B cell (primary cell): ENCODE measurements at regions of chr17 and their contacts with region 1.

Region 1: GRCh38 chr17:81917565-81918332 is at the start of gene SIRT7:
- DNase-seq: peak; percentile 92
- ATAC-seq: peak; percentile 90
- H3K4me3 ChIP-seq: peak within 1 kb of the TSS; percentile 53 to 75 (median 69)
- H3K4me3 Mint-ChIP-seq: peak within 1 kb of the TSS; percentile 91
- H3K27ac ChIP-seq: peak within 1 kb of the TSS; percentile 44 to 61
- H3K27ac Mint-ChIP-seq: peak within 1 kb of the TSS; percentile 90
- H3K4me1 ChIP-seq: peaks cover 13 to 22% of the 10 kb centered on the region in 2 donors
- H3K4me1 Mint-ChIP-seq: peaks cover 28% of the 10 kb centered on the region
- H3K27me3 ChIP-seq: no peaks in the 10 kb centered on the region
- H3K27me3 Mint-ChIP-seq: no peaks in the 10 kb centered on the region
- CTCF ChIP-seq: no peak
- total RNA-seq, gene SIRT7: 82.7 and 83.2 TPM in 2 replicates

Region 2: GRCh38 chr17:81651692-81652091 is 266.1 kb before region 1 on chr17:
- CTCF ChIA-PET with region 1: no interaction called
- POLR2A ChIA-PET with region 1: no interaction called
- intact Hi-C with region 1: no loop called
- DNase-seq: no peak
- ATAC-seq: no peak
- H3K4me3 ChIP-seq: no peak overlapping the region
- H3K4me3 Mint-ChIP-seq: peak overlapping the region; percentile 49
- H3K27ac ChIP-seq: no peak overlapping the region
- H3K27ac Mint-ChIP-seq: no peak overlapping the region
- H3K4me1 ChIP-seq: peaks cover 12 to 18% of the 10 kb centered on the region in 2 donors
- H3K4me1 Mint-ChIP-seq: peaks cover 15% of the 10 kb centered on the region
- H3K27me3 ChIP-seq: peaks cover 0 to 36% (median 4%) of the 10 kb centered on the region in 4 experiments
- H3K27me3 Mint-ChIP-seq: peaks cover 18% of the 10 kb centered on the region
- CTCF ChIP-seq: no peak

Region 3: GRCh38 chr17:81871387-81872230 is 46.1 kb before region 1 on chr17:
- CTCF ChIA-PET with region 1: interaction called, 4 read pairs
- POLR2A ChIA-PET with region 1: no interaction called
- intact Hi-C with region 1: loop called (anchors 2 kb)
- DNase-seq: peak; percentile 96
- ATAC-seq: peak; percentile 2
- H3K4me3 ChIP-seq: peak overlapping the region; percentile 27 to 90 (median 84)
- H3K4me3 Mint-ChIP-seq: peak overlapping the region; percentile 89
- H3K27ac ChIP-seq: peak overlapping the region; percentile 90 to 99
- H3K27ac Mint-ChIP-seq: peak overlapping the region; percentile 98
- H3K4me1 ChIP-seq: peaks cover 22 to 39% of the 10 kb centered on the region in 2 donors
- H3K4me1 Mint-ChIP-seq: peaks cover 32% of the 10 kb centered on the region
- H3K27me3 ChIP-seq: no peaks in the 10 kb centered on the region
- H3K27me3 Mint-ChIP-seq: no peaks in the 10 kb centered on the region
- CTCF ChIP-seq: peak; percentile 50

Region 4: DNA sequence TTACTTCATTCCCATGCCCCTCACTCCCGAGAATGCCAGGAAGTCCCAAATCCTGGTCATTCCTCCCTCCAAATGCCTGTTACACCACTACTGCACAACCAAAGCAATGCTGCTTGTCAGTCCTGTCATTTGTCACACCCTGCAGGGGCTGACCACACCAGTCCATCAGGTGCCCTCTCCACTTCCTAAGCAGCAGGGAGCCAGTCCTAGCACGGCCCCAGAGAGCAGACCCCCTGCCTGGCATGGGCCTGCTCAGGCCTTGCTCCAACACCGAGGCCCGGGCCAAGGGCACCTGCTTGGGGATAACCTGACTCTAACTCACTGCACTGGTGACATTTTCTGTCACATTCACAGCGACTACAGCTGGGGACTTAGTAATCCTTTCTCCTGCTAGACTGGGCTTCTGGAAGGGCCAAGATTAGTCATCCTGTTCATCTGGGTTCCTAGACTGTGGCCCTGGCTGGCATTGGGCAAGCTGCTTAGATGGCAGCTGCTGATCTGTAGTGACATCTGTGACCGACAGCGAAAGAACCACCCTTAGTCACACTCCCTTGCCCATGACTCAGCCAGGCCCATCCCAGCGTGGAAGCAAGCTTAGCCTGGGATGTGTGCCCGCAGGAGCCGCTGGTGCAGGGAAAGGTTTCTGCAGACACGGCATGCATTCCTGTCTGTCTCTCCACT is 31.7 kb before region 1 on chr17:
- CTCF ChIA-PET with region 1: no interaction called
- POLR2A ChIA-PET with region 1: no interaction called
- intact Hi-C with region 1: no loop called
- DNase-seq: no peak
- ATAC-seq: no peak
- H3K4me3 ChIP-seq: no peak overlapping the region
- H3K4me3 Mint-ChIP-seq: no peak overlapping the region
- H3K27ac ChIP-seq: no peak overlapping the region
- H3K27ac Mint-ChIP-seq: peak overlapping the region; percentile 15
- H3K4me1 ChIP-seq: peaks cover 10 to 12% of the 10 kb centered on the region in 2 donors
- H3K4me1 Mint-ChIP-seq: peaks cover 13% of the 10 kb centered on the region
- H3K27me3 ChIP-seq: no peaks in the 10 kb centered on the region
- H3K27me3 Mint-ChIP-seq: no peaks in the 10 kb centered on the region
- CTCF ChIP-seq: no peak